WTC11 (cell line): ENCODE measurements at regions of chr19 and their contacts with region 1.

Region 1: DNA sequence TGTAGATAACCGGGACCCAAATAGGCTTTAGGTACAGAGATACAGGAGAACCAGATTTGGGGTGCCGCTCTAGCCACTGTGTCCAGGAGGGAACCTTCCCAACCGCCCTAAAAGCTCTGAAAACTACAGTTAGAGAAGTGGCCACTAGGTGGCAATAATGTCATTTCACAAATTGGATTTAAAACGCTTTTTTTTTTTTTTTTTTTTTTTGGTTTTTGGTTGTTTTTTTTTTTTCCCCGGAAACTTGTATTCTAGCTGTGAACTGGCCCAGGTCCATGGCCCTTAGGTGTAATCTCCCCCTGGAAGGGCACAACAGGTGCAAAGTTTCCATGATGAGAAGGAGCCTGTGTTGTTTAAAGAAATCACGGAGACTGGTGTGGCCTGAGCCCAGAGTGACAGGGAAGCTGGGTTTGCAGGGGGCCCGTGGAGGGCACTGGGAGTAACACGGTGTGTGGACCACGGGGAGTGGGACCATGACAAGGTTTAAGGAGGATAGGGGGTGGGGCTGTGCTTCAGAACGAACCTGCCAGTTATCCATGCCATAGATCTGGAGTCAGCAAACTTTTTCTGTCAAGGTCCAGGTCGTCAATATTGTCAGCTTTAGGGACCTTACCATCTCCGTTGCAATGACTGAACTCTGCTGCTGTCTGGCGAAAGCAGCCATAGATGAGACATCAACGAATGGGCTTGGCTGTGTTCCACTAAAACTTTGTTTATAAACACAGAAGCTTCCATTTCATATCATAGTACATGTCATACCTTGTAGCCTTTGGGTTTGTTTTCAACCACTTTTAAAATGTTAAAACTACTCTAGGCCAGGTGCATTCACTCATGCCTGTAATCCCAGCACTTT is 10.1 kb downstream of the OR1I1 start:
- DNase-seq: peak; percentile 35
- ATAC-seq: peak; percentile 76
- H3K4me3 Mint-ChIP-seq: no peak overlapping the region
- H3K27ac Mint-ChIP-seq: no peak overlapping the region
- H3K4me1 Mint-ChIP-seq: no peaks in the 10 kb centered on the region
- H3K27me3 Mint-ChIP-seq: peaks cover 8% of the 10 kb centered on the region
- CTCF ChIP-seq: peak; percentile 69

Region 2: GRCh38 chr19:14871619-14872230 is 220.4 kb before region 1 on chr19:
- CTCF ChIA-PET with region 1: no interaction called
- POLR2A ChIA-PET with region 1: no interaction called
- DNase-seq: no peak
- ATAC-seq: no peak
- H3K4me3 Mint-ChIP-seq: no peak overlapping the region
- H3K27ac Mint-ChIP-seq: no peak overlapping the region
- H3K4me1 Mint-ChIP-seq: no peaks in the 10 kb centered on the region
- H3K27me3 Mint-ChIP-seq: peaks cover 11% of the 10 kb centered on the region
- CTCF ChIP-seq: no peak

Region 3: GRCh38 chr19:14992780-14993179 is 99.3 kb before region 1 on chr19:
- CTCF ChIA-PET with region 1: no interaction called
- POLR2A ChIA-PET with region 1: no interaction called
- DNase-seq: no peak
- ATAC-seq: no peak
- H3K4me3 Mint-ChIP-seq: no peak overlapping the region
- H3K27ac Mint-ChIP-seq: no peak overlapping the region
- H3K4me1 Mint-ChIP-seq: no peaks in the 10 kb centered on the region
- H3K27me3 Mint-ChIP-seq: peaks cover 17% of the 10 kb centered on the region
- CTCF ChIP-seq: no peak

Region 4: GRCh38 chr19:15022752-15023151 is 69.4 kb before region 1 on chr19:
- CTCF ChIA-PET with region 1: interaction called, 12 read pairs
- POLR2A ChIA-PET with region 1: no interaction called
- DNase-seq: peak; percentile 21
- ATAC-seq: peak; percentile 46
- H3K4me3 Mint-ChIP-seq: no peak overlapping the region
- H3K27ac Mint-ChIP-seq: no peak overlapping the region
- H3K4me1 Mint-ChIP-seq: no peaks in the 10 kb centered on the region
- H3K27me3 Mint-ChIP-seq: peaks cover 23% of the 10 kb centered on the region
- CTCF ChIP-seq: no peak

Region 5: DNA sequence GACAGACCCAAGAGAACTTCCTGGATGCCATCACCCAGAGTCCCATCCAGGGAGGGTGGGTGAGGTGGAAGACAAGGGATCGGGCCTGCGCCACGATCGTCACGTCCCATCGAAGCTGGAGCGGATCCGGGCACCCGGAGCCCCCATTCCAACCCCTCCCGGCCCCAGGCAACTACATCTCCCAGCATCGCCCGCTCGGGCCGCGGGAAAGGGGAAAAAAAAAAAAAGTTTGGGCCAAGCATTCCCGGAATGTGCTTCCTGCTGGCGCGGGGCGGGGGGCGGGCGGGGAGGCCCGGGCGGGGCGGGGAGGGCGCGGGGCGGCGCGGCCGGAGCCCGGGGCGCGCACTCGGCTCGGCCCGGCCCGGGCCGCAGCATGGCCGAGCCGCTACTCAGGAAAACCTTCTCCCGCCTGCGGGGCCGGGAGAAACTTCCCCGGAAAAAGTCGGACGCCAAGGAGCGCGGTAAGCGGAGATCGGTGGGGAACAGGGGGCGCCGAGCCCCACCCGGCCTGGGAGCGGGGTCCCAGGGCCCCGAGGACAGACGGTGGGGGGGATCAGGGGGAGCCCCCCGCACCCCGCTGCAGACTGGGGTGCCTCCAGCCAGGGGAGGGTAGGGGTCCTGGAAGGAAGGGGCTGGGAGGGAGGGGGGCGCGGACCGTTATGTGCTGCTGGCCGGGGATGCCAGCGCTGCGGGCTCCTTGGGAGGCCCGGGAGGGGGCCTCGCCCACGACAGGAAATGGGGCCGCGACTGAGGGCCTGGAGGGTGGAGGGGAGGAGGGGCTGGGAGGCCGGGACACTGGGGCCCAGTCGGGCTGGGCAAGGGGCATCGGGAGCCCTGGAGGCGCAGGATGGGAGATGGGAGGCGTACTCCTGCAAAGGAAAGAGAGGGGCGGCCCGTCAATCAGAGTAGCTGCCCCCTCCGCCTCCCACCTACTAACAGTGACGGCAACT is 15.2 kb after region 1 on chr19 and contains the start of gene SYDE1:
- CTCF ChIA-PET with region 1: interaction called, 80 read pairs
- POLR2A ChIA-PET with region 1: interaction called, 4 read pairs
- DNase-seq: peak; percentile 71
- ATAC-seq: peak; percentile 72
- H3K4me3 Mint-ChIP-seq: peak within 1 kb of the TSS; percentile 78
- H3K27ac Mint-ChIP-seq: peak within 1 kb of the TSS; percentile 72
- H3K4me1 Mint-ChIP-seq: peaks cover 13% of the 10 kb centered on the region
- H3K27me3 Mint-ChIP-seq: peaks cover 8% of the 10 kb centered on the region; the same call in 1 of the 2 replicates
- CTCF ChIP-seq: no peak
- total RNA-seq, gene SYDE1: 15.0 to 21.9 TPM (median 19.6 TPM) in 3 replicates

Region 6: DNA sequence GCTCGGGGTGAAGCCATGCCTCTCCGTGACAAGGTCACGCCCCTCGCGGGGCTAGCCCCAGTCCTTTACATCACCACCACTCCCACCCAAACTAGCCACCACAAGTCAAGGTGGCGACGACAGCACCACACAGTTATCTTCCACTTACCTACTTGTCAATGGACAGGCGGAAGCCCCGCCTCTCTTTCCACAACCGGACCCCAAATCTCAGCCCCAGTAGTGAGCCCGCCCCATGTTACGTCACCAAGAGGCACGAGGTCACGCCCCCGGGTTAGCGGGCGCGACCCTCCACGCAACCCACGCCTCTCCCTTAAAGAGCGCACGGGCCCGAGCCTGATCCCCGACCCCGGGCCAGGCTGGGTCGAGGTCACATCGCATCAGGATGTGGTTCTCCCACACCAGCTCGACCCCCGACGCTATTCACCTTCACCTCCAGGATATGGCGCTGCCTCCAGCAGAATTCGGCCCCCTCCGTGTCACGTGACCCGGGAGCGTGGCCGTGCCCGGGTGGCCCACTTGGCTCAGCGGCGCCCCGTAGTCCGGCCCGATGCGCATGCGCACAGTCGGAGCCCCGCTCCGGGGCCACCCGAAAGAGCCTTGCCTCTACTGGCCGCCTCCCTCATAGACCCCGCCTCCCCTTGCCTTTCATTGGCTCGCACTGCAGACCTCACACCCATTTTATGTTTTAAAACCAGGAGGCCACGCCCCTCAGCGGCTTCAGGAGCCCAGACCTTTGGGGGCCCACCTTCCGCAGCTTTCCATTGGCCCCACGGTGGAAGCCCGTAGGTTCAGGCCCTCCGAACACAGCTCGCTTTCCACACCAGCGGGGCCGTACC is 33.3 kb after region 1 on chr19:
- CTCF ChIA-PET with region 1: interaction called, 15 read pairs
- POLR2A ChIA-PET with region 1: no interaction called
- DNase-seq: peak; percentile 98
- ATAC-seq: peak; percentile 95
- H3K4me3 Mint-ChIP-seq: peak overlapping the region; percentile 99
- H3K27ac Mint-ChIP-seq: peak overlapping the region; percentile 100
- H3K4me1 Mint-ChIP-seq: peaks cover 5% of the 10 kb centered on the region; the same call in 1 of the 2 replicates
- H3K27me3 Mint-ChIP-seq: no peaks in the 10 kb centered on the region; the same call in 1 of the 2 replicates
- CTCF ChIP-seq: no peak

Region 7: DNA sequence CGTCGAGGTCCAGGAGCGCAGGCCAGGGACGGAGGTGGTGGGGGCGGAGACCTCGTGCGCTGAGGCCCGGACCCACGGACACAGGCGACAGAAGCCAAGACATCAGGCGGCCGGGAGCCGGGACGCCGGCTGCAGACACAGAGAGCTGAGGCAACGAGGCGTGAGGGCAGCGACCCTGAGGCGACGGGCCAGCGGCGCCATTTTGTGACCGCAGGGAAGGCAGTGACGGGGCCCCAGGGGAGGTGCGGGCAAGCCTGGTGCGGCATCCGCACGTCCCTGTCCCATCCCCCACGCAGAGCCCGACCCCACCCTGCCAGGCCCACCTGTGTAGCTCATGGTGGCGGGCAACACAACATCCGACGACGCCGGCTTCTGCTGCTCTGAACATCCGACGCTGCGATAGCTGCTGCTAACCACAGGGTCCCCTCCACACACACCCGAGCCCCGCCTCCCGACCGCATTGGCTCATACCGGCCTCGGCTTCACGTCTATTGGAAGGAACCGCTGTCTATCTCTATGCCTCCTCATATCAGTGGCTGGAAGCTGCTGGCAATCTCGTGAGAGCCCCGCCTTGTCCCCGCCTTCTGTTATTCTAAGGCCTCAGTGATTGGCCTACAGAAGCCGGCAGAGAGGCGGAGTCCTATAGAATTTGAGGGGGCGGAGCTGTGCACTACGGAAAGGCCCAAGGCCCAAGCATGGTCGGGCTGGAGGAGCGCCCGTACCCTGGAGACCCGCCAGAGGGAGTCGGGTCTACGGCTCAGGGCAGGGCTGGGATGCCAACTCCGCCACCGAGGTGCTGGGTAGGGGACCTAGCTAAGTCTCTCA is 326.7 kb after region 1 on chr19 and contains the start of gene AKAP8L:
- CTCF ChIA-PET with region 1: interaction called, 23 read pairs
- POLR2A ChIA-PET with region 1: no interaction called
- DNase-seq: peak; percentile 99
- ATAC-seq: peak; percentile 97
- H3K4me3 Mint-ChIP-seq: peak within 1 kb of the TSS; percentile 95
- H3K27ac Mint-ChIP-seq: peak within 1 kb of the TSS; percentile 94
- H3K4me1 Mint-ChIP-seq: peaks cover 14% of the 10 kb centered on the region
- H3K27me3 Mint-ChIP-seq: no peaks in the 10 kb centered on the region
- CTCF ChIP-seq: no peak
- total RNA-seq, gene AKAP8L: 184 to 231 TPM (median 184 TPM) in 3 replicates